HEK293 (cell line): ENCODE measurements at regions of chr10 and their contacts with region 1.

Region 1: DNA sequence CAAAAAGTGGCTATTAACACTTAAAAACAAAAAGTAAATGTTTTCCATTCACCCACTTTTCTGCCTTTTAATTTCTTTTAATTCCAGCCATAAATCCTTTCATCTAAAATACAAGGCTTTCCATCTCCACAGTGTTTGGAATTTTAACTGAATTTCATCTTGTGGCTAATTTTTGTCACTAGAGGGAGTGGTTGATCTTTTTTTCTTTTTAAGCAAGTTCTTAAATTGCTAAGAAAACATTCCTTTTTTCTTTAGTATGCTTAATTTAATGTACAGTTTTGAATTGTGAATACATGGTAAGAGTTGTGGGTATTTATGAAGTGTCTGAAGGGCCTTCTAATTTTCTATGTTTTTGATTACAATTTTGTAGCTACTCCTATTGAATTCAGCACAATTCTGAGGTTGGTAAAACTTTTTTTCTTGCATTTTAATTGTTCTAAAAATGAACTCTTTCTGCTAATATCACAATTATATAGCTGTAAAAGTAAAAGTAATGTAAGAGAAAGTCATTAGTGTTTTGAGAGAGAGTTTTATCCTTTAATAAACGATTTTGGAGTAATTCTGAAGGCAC is 54.9 kb upstream of the ANK3 start:
- H3K4me3 ChIP-seq: no peak overlapping the region
- H3K27ac ChIP-seq: no peak overlapping the region
- H3K4me1 ChIP-seq: no peaks in the 10 kb centered on the region; the same call in 1 of the 2 replicates
- CTCF ChIP-seq: peak; percentile 42; the same call in 1 of the 2 replicates

Region 2: DNA sequence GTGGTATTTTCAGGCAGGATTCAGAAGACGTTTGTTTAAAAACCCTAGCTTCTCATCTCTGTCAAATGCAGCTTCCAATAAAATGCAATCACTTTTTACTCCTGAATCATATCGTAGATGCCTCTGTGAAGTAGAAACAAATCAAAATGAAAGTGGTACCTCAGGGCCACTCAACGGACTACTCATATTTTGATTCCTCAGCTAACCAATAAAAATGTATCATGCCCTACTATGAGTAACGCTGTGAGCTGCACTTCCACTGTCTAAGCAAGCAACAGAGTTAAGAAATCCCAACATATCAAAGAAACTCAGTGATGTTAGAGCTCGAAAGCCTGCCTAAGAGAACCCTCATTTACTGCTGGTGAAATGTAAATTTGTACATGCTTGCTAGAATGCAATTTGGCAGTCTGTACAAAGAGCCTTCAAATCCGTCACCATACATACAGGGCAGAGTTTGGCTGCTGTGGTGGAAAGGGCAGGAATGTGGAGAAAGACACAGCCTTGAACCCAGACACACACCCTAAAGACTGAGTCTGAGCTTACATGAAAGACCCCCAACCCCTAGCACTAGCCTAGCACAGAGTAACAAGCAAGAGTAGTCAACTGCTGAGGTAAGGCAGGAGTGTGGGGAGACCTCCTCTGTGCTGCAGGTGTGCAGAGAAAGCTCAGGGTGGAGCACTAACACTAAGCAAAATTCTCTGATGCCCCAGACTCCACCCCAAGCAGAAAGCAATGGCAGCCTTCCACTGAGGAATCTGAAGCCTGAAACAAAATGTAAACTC is 206.4 kb before region 1 on chr10:
- CTCF ChIA-PET with region 1: interaction called, 11 read pairs
- POLR2A ChIA-PET with region 1: no interaction called
- H3K4me3 ChIP-seq: no peak overlapping the region
- H3K27ac ChIP-seq: no peak overlapping the region
- H3K4me1 ChIP-seq: no peaks in the 10 kb centered on the region
- CTCF ChIP-seq: 0 out of 2 replicates have a peak, but pooled peaks have one; percentile 36

Region 3: GRCh38 chr10:60646966-60647796 is 202.6 kb after region 1 on chr10:
- CTCF ChIA-PET with region 1: interaction called, 105 read pairs
- POLR2A ChIA-PET with region 1: no interaction called
- H3K4me3 ChIP-seq: no peak overlapping the region
- H3K27ac ChIP-seq: no peak overlapping the region
- H3K4me1 ChIP-seq: peaks cover 7% of the 10 kb centered on the region; the same call in 1 of the 2 replicates
- CTCF ChIP-seq: peak; percentile 52; the same call in 1 of the 2 replicates